CD14-positive monocyte (primary cell): ENCODE measurements at regions of chr7 and their contacts with region 1.

Region 1: DNA sequence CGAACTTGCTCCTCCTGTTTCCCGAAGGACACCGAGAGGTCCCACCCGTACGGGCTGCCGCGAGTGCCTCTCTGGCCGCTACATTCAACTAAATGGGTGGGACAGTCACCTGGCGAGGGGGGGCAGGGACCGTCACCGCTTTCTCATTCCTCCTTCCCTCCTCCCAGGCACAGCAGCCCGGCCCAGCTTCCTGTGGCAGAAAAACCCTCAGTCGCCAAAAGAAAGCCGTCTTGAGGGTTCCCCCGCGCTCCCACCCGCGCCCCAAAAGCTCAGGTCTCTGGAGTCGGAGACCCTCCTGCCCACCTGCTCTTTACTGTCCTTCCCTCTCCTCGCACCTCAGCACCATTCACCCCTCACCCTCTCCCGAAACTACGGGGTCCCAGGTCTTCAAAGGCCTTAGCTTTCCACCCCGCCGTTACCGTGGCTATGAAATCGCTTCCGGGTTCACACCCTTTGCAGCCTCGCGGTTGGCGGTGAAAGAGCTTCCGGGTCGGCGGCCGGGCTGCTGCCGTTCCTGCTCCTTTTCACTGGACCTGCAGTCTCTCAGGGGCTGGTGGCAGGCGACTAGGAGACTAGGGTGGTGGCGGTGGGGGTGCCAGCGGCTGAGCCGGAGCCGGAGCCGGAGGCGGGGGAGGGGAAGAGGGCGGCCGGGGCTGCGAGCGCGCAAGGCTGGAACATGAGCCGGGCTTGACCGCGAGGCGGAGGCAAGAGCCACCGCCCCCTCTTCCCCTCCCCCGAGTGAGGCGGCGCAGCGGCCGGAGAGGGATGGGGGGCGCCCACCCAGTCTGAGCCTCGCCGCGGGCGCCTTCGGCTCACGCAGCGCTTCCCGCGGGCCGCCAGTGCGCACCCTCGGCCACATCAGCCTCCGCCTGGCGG is at the starts of genes ANKIB1 and KRIT1:
- DNase-seq: peak; percentile 75 to 82 (median 81)
- H3K4me3 ChIP-seq: peak within 1 kb of the TSS; percentile 66 to 83 (median 72)
- H3K4me3 Mint-ChIP-seq: peak within 1 kb of the TSS; percentile 98 to 99
- H3K27ac ChIP-seq: peak within 1 kb of the TSS; percentile 93 to 95
- H3K27ac Mint-ChIP-seq: peak within 1 kb of the TSS; percentile 98 to 100 (median 99)
- H3K4me1 ChIP-seq: peaks cover 22 to 36% of the 10 kb centered on the region in 2 donors
- H3K4me1 Mint-ChIP-seq: peaks cover 39% of the 10 kb centered on the region
- H3K27me3 ChIP-seq: no peaks in the 10 kb centered on the region
- H3K27me3 Mint-ChIP-seq: no peaks in the 10 kb centered on the region
- CTCF ChIP-seq: peak; percentile 18
- polyA plus RNA-seq, gene ANKIB1: 4.8 to 16.8 (median 5.7) TPM
- polyA plus RNA-seq, gene KRIT1: 4.7 to 28.8 (median 6.8) TPM

Region 2: GRCh38 chr7:92134271-92135051 is 111.3 kb before region 1 on chr7 and contains the start of gene CYP51A1:
- intact Hi-C with region 1: loop called (anchors 10 kb)
- DNase-seq: peak; percentile 81 to 89 (median 81)
- H3K4me3 ChIP-seq: peak within 1 kb of the TSS; percentile 87 to 98 (median 90)
- H3K4me3 Mint-ChIP-seq: peak within 1 kb of the TSS; percentile 96 to 99
- H3K27ac ChIP-seq: peak within 1 kb of the TSS; percentile 86 to 93
- H3K27ac Mint-ChIP-seq: peak within 1 kb of the TSS; percentile 95 to 100 (median 100)
- H3K4me1 ChIP-seq: peaks cover 12 to 22% of the 10 kb centered on the region in 2 donors
- H3K4me1 Mint-ChIP-seq: peaks cover 23% of the 10 kb centered on the region
- H3K27me3 ChIP-seq: no peaks in the 10 kb centered on the region
- H3K27me3 Mint-ChIP-seq: peaks cover 0 to 8% (median 1%) of the 10 kb centered on the region in 3 donors
- CTCF ChIP-seq: no peak
- polyA plus RNA-seq, gene CYP51A1: 5.9 to 32.4 (median 27.4) TPM

Region 3: DNA sequence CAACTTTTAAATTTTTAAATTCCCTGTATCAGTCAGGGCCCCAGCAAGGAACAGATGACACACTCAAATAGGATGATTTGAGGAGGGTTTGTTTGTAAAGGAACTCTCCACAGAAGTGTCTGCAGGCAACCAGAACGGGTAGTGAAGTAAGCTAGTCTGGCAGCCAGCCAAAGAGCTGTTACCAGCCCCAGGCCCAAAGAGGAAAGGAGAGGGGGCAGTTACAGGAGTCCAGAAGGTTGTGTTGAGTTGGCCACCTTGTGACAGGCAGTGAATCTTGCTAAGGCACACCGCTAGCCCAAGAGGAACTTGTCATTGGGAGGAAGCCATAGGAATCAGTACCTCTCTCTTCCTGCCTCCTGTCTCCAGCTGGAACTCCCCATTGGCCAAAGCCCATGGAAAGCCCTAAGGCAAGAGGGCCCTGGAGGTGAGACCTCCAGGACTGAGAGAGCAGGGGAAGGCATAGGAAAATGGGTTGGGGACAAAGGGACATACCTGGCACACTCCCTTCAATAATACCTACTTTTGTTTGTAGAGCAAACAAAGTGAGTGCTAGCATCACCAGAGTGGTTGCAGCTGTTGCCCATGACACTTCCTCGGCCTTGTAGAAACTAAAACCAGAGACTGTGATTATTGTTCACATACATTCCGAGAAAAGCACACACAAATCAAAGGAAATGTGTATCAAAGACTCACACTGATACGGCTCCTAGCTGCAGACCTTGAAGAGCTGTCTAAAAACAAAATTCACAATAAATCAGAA is 176.1 kb after region 1 on chr7:
- intact Hi-C with region 1: no loop called
- DNase-seq: peak in 2 of 3 donors; percentile 10 to 16
- H3K4me3 ChIP-seq: no peak overlapping the region
- H3K4me3 Mint-ChIP-seq: no peak overlapping the region
- H3K27ac ChIP-seq: no peak overlapping the region
- H3K27ac Mint-ChIP-seq: no peak overlapping the region
- H3K4me1 ChIP-seq: peaks cover 18 to 32% of the 10 kb centered on the region in 2 donors
- H3K4me1 Mint-ChIP-seq: peaks cover 32% of the 10 kb centered on the region
- H3K27me3 ChIP-seq: no peaks in the 10 kb centered on the region
- H3K27me3 Mint-ChIP-seq: peaks cover 2 to 6% (median 5%) of the 10 kb centered on the region in 3 donors
- CTCF ChIP-seq: no peak

Region 4: DNA sequence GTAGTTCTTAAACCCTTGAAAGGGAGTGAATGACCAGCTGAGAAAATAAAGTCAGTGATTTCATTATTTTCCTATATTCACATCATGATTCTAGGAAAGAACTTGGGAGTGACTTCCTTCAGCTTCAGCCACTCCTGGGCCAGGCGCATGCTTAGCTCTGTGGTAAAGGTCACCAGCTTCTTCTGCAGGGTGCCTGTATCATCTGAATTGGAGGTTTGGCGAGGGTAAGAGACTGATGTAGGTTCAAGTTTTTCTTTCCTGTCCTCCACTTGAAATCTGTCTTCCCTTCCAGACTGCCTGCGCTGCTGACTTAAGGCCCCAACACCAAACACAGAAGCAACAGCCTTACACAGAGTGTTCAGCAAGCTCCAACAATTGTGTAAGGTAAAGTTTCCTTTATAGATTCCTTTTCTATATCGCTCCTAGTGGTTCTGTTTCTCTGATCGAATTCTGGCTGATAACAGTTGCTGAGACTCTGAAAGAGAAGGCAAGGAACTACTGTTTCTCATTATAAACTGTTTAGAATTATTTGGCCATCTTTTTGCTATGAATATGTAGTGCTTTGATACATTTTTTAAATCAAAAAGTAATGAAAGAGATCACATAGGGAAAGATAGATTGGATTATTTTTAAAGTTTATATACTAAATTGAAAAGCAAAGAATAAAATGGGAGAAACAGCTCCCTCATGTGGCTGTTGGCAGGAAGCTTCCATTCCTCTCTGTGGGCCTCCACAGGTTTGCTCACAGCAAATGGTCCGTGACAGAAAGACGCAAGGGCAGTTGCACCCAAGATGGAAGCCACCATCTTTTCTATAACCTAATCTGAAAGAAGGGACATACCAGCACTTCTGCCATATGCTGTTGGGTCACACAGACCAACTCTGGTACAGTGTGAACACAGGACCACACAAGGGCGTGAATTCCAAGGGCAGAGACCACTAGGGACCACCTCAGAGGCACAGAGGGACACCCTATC is 215.6 kb after region 1 on chr7:
- intact Hi-C with region 1: no loop called
- DNase-seq: no peak
- H3K4me3 ChIP-seq: no peak overlapping the region
- H3K4me3 Mint-ChIP-seq: no peak overlapping the region
- H3K27ac ChIP-seq: no peak overlapping the region
- H3K27ac Mint-ChIP-seq: peak overlapping the region in 1 of 7 donors; percentile 3
- H3K4me1 ChIP-seq: no peaks in the 10 kb centered on the region
- H3K4me1 Mint-ChIP-seq: no peaks in the 10 kb centered on the region
- H3K27me3 ChIP-seq: no peaks in the 10 kb centered on the region
- H3K27me3 Mint-ChIP-seq: no peaks in the 10 kb centered on the region
- CTCF ChIP-seq: peak; percentile 76